Esophagus squamous epithelium (tissue), 5 donors: ENCODE measurements at regions of chr17 and their contacts with region 1.

Region 1: DNA sequence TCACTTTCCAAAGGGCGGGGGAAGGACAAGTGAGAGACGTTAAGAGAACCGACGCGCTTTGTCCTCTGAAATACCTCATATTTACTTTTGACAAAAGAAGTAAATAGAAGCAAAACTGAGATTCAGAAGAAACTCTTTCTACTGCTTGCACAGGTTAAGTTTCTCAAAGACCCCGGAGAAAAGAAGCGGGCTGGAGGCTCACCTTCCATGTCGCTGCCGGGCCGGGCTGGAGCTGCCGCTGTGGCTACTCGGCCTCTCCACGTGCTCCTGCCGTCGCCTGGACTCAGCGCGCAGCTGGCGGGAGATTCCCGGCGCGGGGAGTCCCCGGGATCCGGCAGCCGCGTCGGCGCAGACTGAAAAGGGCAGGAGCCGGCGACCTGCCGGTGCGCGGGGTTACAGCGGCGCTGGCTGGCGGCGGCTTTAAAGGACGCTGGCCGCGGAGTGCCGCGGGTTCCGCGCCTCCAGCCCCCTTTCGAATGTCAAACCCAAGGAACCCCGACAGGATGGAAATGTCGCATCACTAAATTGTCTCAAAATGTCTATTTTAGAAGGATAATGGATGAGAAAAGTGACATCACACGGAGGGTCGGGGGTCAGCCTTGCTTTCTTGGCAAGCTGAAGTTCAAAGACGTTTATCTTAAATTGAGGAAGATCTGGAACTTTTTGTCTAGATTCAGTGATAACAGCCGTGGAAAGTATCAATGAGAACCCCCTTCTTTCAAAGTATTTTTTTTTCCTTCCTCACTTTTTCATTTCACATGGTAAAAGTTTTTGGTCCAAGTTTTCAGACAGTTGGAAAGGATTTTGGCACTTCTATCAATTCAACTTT is at the start of gene IKZF3:
- DNase-seq: no peak
- H3K4me3 ChIP-seq: peak within 1 kb of the TSS in 3 of 4 donors; percentile 30 to 59 (median 40)
- H3K27ac ChIP-seq: peak within 1 kb of the TSS; percentile 24 to 63 (median 40)
- H3K4me1 ChIP-seq: peaks cover 0 to 19% (median 6%) of the 10 kb centered on the region in 3 donors
- H3K27me3 ChIP-seq: peaks cover 7 to 100% (median 15%) of the 10 kb centered on the region in 4 donors
- CTCF ChIP-seq: peak in 5 of 6 experiments; percentile 10 to 46 (median 33)
- POLR2A ChIP-seq: no peak
- total RNA-seq, gene IKZF3: 2.1 to 9.0 (median 3.8) TPM

Region 2: DNA sequence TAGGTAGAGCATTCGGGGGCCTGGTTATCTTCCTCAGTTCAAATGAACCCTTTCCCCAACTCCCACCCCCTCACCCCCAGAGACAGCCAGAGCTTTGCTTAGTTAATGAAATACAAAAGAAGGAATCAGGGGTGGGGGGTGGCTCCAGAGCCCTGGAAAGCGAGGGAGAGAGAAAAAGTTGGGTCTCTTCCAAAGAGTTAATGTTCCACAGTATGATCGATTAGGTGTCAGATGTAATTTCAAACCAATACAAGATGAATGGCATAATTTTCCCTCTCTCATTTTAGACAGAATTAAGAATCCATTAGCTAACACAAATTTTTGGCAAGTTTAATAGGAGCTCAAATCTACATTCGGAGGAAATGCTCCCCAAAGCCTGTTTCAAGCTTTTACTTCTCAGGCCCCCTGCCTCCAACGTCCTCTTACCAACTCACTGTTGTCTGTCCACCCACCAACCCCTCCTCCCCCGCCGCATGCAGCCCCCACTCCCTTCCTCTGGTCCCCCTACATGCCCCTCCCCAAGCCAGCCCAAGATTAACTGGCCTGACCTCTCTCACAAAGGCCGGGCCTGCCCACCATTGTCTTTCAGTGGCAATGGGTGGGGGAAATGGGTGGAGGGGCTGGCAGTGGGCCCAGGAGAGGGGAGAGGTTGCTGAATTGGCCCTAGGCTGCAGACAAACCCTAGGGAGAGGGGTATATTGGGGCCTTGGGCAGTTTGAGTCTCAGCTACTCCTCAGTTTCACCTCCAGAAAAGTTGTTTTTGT is 284.6 kb before region 1 on chr17:
- intact Hi-C with region 1: no loop called
- DNase-seq: no peak
- H3K4me3 ChIP-seq: no peak overlapping the region
- H3K27ac ChIP-seq: no peak overlapping the region
- H3K4me1 ChIP-seq: peaks cover 0 to 11% (median 0%) of the 10 kb centered on the region in 3 donors
- H3K27me3 ChIP-seq: peaks cover 0 to 10% (median 0%) of the 10 kb centered on the region in 4 donors
- CTCF ChIP-seq: no peak
- POLR2A ChIP-seq: no peak

Region 3: GRCh38 chr17:39769974-39770587 is 94.1 kb before region 1 on chr17:
- intact Hi-C with region 1: loop called (anchors 10 kb)
- DNase-seq: no peak
- H3K4me3 ChIP-seq: no peak overlapping the region
- H3K27ac ChIP-seq: peak overlapping the region in 3 of 4 donors; percentile 6 to 58 (median 9)
- H3K4me1 ChIP-seq: peaks cover 0 to 30% (median 0%) of the 10 kb centered on the region in 3 donors
- H3K27me3 ChIP-seq: peaks cover 0 to 4% (median 0%) of the 10 kb centered on the region in 4 donors
- CTCF ChIP-seq: no peak
- POLR2A ChIP-seq: no peak